Posterior vena cava (tissue), 2 donors: ENCODE measurements at regions of chr5 and their contacts with region 1.

Region 1: DNA sequence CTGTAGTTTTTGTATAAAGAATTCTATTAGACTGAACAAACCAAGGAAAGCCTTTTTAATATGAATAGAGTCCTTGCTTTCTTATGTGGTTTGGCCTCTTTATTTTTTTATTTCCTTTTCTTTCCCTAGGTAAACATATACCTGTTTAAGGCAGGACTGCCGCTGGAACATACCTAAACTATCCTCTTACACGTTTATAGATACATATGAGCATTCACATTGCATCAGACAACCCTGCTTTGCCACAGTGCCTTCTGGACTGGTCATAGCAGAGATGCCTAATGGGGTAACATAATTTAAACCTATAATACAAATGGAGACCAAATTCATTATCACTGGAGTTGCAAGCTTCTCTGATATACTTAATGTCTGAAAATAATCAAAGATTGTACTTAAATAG is 12.5 kb downstream of the GRAMD2B start:
- DNase-seq: no peak

Region 2: DNA sequence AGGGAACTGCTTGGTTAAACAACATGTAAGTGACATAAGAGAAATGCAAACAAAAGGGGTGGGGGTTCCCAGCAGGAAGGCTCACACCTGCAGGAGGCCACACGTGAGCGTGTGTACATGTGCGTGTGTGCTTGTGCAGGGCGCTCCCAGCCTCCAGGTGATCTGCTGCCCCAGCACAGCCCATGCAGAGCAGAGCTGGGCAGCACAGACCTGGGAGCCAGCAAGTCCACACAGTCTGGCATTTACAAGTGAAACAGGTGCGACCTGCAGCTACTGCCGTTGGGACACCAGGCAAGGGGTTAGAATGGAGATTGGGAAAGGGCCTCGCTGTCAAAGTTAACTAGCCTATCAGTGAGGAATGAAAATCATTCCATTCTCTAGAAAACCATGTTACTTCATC is 29.2 kb after region 1 on chr5:
- intact Hi-C with region 1: loop called in 1 of 2 experiments (anchors 1 kb)
- DNase-seq: no peak

Region 3: GRCh38 chr5:126477294-126478117 is 41.8 kb after region 1 on chr5:
- intact Hi-C with region 1: no loop called
- DNase-seq: no peak